Heart right ventricle (tissue), 16 donors: ENCODE measurements at regions of chr12 and their contacts with region 1.

Region 1: GRCh38 chr12:114636723-114637483 is 47.1 kb downstream of the TBX3 start:
- DNase-seq: no peak
- ATAC-seq: no peak
- H3K4me3 ChIP-seq: no peak overlapping the region
- H3K27ac ChIP-seq: no peak overlapping the region
- H3K4me1 ChIP-seq: no peaks in the 10 kb centered on the region
- H3K27me3 ChIP-seq: peaks cover 0 to 13% (median 1%) of the 10 kb centered on the region in 7 donors
- CTCF ChIP-seq: peak in 6 of 9 donors; percentile 19 to 34 (median 24)

Region 2: GRCh38 chr12:113794774-113795173 is 842.1 kb before region 1 on chr12:
- intact Hi-C with region 1: no loop called
- DNase-seq: no peak
- ATAC-seq: no peak
- H3K4me3 ChIP-seq: no peak overlapping the region
- H3K27ac ChIP-seq: no peak overlapping the region
- H3K4me1 ChIP-seq: no peaks in the 10 kb centered on the region
- H3K27me3 ChIP-seq: no peaks in the 10 kb centered on the region
- CTCF ChIP-seq: no peak

Region 3: DNA sequence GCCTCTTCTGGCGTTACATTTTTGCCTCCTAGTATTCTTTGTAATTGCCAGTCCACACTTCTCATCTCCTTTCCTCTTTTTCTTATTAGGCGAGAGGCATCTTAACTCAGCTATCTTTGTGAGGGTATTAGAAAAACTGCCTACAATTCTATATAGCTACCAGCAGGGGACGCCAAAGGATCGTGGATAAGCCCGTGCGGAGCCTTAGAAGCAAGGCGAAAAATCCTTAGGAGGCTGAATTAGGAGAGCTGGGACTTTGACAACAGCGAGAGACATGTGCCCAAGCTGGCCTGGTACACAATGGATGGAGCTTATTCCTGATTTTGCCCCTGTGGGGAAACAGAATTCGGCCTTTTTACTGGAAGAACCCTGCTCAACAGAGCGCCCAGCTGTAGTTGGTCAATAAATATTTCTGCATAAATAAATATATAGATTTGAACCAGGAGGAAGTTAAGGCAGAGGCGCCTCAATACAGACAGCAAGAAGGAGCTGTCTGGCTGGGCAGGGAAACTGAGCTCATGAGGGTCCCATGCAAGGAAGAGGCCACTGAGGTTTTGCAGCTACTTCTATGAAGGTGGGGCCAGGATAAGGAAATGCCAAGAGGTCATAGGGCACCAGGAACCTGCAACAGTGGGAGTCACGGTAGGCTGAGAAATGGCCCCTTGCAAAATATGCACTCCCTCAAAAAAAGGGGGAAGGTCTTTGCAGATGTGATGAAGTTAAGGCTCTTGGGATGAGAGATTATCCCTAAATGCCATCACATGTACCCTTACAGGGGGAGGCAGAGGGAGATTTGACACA is 656.2 kb before region 1 on chr12:
- intact Hi-C with region 1: loop called in 2 of 10 experiments (anchors 10 kb)
- DNase-seq: no peak
- ATAC-seq: peak in 6 of 8 donors; percentile 49 to 74 (median 56)
- H3K4me3 ChIP-seq: no peak overlapping the region
- H3K27ac ChIP-seq: no peak overlapping the region
- H3K4me1 ChIP-seq: no peaks in the 10 kb centered on the region
- H3K27me3 ChIP-seq: peaks cover 0 to 66% (median 41%) of the 10 kb centered on the region in 7 donors
- CTCF ChIP-seq: peak; percentile 81 to 95 (median 85)